IMR-90 (cell line): ENCODE measurements at regions of chr1 and their contacts with region 1.

Region 1: GRCh38 chr1:241531195-241532161 is 700 bp upstream of the KMO start:
- DNase-seq: peak; percentile 78
- ATAC-seq: peak; percentile 93
- H3K4me3 ChIP-seq: peak overlapping the region; percentile 42
- H3K27ac ChIP-seq: peak overlapping the region; percentile 9; the same call in 1 of the 2 replicates
- H3K4me1 ChIP-seq: no peaks in the 10 kb centered on the region
- H3K27me3 ChIP-seq: peaks cover 9% of the 10 kb centered on the region
- CTCF ChIP-seq: peak; percentile 75
- POLR2A ChIP-seq: no peak
- RAD21 ChIP-seq: peak; percentile 80

Region 2: GRCh38 chr1:241551759-241552638 is 20.5 kb after region 1 on chr1:
- CTCF ChIA-PET with region 1: no interaction called
- POLR2A ChIA-PET with region 1: no interaction called
- dilution Hi-C with region 1: no loop called
- in situ Hi-C with region 1: no loop called
- intact Hi-C with region 1: no loop called
- DNase-seq: peak; percentile 10
- ATAC-seq: peak; percentile 40
- H3K4me3 ChIP-seq: no peak overlapping the region
- H3K27ac ChIP-seq: no peak overlapping the region
- H3K4me1 ChIP-seq: no peaks in the 10 kb centered on the region
- H3K27me3 ChIP-seq: no peaks in the 10 kb centered on the region; the same call in 1 of the 2 replicates
- CTCF ChIP-seq: no peak
- POLR2A ChIP-seq: no peak
- RAD21 ChIP-seq: no peak

Region 3: GRCh38 chr1:241611063-241611462 is 79.6 kb after region 1 on chr1:
- CTCF ChIA-PET with region 1: no interaction called
- POLR2A ChIA-PET with region 1: no interaction called
- dilution Hi-C with region 1: no loop called
- in situ Hi-C with region 1: no loop called
- intact Hi-C with region 1: loop called (anchors 2 kb)
- DNase-seq: peak; percentile 79
- ATAC-seq: peak; percentile 46
- H3K4me3 ChIP-seq: no peak overlapping the region
- H3K27ac ChIP-seq: no peak overlapping the region
- H3K4me1 ChIP-seq: peaks cover 15% of the 10 kb centered on the region
- H3K27me3 ChIP-seq: no peaks in the 10 kb centered on the region
- CTCF ChIP-seq: peak; percentile 67
- POLR2A ChIP-seq: no peak
- RAD21 ChIP-seq: peak; percentile 77

Region 4: DNA sequence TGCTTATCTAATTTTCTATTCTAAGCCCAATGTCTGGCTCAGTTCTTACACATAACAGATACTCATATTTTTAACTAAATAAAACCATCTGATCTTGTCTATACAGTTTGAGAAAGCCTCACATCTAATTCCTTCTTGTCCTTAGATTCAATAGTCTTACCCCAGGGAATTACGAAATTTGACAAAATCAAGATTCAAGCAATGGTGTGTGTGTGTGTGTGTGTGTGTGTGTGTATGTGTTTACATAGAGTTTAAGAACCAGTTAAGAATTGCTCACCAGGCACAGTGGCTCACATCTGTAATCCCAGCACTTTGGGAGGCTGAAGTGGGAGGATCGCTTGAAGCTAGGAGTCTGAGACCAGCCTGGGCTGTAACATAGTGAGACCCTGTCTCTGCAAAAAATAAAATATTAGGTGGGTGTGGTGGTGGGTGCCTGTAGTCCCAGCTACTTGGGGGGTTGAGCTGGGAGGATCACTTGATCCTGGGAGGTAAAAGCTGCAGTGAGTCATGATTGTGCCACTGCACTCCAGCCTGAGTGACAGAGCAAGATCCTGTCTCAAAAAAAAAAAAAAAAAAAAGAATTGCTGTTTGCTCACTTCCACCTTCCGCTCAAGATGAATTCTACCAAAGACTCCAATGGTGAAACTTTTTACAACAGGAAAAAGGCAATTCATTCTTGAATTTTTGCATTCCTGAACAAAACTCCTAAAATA is 126.8 kb after region 1 on chr1:
- CTCF ChIA-PET with region 1: no interaction called
- POLR2A ChIA-PET with region 1: no interaction called
- dilution Hi-C with region 1: no loop called
- in situ Hi-C with region 1: no loop called
- intact Hi-C with region 1: no loop called
- DNase-seq: no peak
- ATAC-seq: no peak
- H3K4me3 ChIP-seq: no peak overlapping the region
- H3K27ac ChIP-seq: no peak overlapping the region
- H3K4me1 ChIP-seq: no peaks in the 10 kb centered on the region
- H3K27me3 ChIP-seq: no peaks in the 10 kb centered on the region; the same call in 1 of the 2 replicates
- CTCF ChIP-seq: no peak
- POLR2A ChIP-seq: no peak
- RAD21 ChIP-seq: no peak

Region 5: GRCh38 chr1:241834733-241835377 is 303.4 kb after region 1 on chr1:
- CTCF ChIA-PET with region 1: interaction called, 3 read pairs
- POLR2A ChIA-PET with region 1: no interaction called
- dilution Hi-C with region 1: no loop called
- in situ Hi-C with region 1: no loop called
- intact Hi-C with region 1: loop called (anchors 1 kb)
- DNase-seq: peak; percentile 79
- ATAC-seq: peak; percentile 40
- H3K4me3 ChIP-seq: no peak overlapping the region
- H3K27ac ChIP-seq: no peak overlapping the region
- H3K4me1 ChIP-seq: peaks cover 11% of the 10 kb centered on the region
- H3K27me3 ChIP-seq: no peaks in the 10 kb centered on the region
- CTCF ChIP-seq: peak; percentile 87
- POLR2A ChIP-seq: no peak
- RAD21 ChIP-seq: peak; percentile 81

Region 6: GRCh38 chr1:241998412-241998921 is 467.0 kb after region 1 on chr1:
- CTCF ChIA-PET with region 1: interaction called, 6 read pairs
- POLR2A ChIA-PET with region 1: no interaction called
- dilution Hi-C with region 1: no loop called
- in situ Hi-C with region 1: loop called (anchors 25 kb)
- intact Hi-C with region 1: loop called (anchors 5 kb)
- DNase-seq: peak; percentile 73
- ATAC-seq: peak; percentile 91
- H3K4me3 ChIP-seq: peak overlapping the region; percentile 40
- H3K27ac ChIP-seq: no peak overlapping the region
- H3K4me1 ChIP-seq: no peaks in the 10 kb centered on the region
- H3K27me3 ChIP-seq: no peaks in the 10 kb centered on the region
- CTCF ChIP-seq: peak; percentile 42
- POLR2A ChIP-seq: no peak
- RAD21 ChIP-seq: peak; percentile 10; the same call in 1 of the 2 replicates

Region 7: GRCh38 chr1:243325305-243325890 is 1793.9 kb after region 1 on chr1:
- CTCF ChIA-PET with region 1: interaction called, 3 read pairs
- POLR2A ChIA-PET with region 1: no interaction called
- dilution Hi-C with region 1: no loop called
- in situ Hi-C with region 1: no loop called
- intact Hi-C with region 1: loop called (anchors 10 kb)
- DNase-seq: peak; percentile 82
- ATAC-seq: peak; percentile 88
- H3K4me3 ChIP-seq: no peak overlapping the region
- H3K27ac ChIP-seq: no peak overlapping the region
- H3K4me1 ChIP-seq: peaks cover 4% of the 10 kb centered on the region; the same call in 1 of the 2 replicates
- H3K27me3 ChIP-seq: no peaks in the 10 kb centered on the region
- CTCF ChIP-seq: peak; percentile 90
- POLR2A ChIP-seq: no peak
- RAD21 ChIP-seq: peak; percentile 95